ENCODE measurements at regions of chr20 and their contacts with region 1.

Region 1: DNA sequence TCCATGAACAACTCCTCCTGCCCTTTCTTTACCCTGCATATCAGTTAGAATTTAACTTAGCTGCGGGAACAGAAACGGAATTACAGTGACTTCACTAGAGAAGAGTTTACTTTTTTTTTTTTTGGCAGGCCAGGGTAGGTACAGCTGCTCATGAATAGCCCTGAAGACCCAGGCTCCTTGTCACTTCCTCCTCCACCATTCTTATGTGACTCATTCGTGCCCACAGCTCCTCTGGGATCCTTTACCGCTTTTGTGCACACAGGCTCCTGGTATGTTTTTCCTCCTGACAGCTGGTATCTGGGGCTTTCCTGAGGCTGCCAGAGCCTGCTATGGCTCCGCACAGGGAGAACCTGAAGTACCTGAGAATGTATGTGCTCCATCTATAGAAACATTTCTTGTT is 3.9 kb upstream of the KCNS1 start:
- DNase-seq: no peak
- H3K4me3 ChIP-seq: no peak overlapping the region
- H3K27ac ChIP-seq: no peak overlapping the region
- H3K4me1 ChIP-seq: peaks cover 0 to 6% (median 3%) of the 10 kb centered on the region in 4 experiments; a peak in 2 of 7 replicates
- H3K27me3 ChIP-seq: peaks cover 0 to 18% (median 12%) of the 10 kb centered on the region in 4 experiments; a peak in 4 of 7 replicates
- CTCF ChIP-seq: no peak
- EP300 ChIP-seq: no peak
- POLR2A ChIP-seq: no peak
- RAD21 ChIP-seq: no peak

Region 2: GRCh38 chr20:44966030-44966961 is 138.5 kb before region 1 on chr20 and contains the start of gene STK4:
- CTCF ChIA-PET with region 1: no interaction called
- POLR2A ChIA-PET with region 1: no interaction called
- DNase-seq: peak; percentile 75 to 95
- H3K4me3 ChIP-seq: peak within 1 kb of the TSS; percentile 83 to 96 (median 92)
- H3K27ac ChIP-seq: peak within 1 kb of the TSS; percentile 52; the same call in 1 of the 2 replicates
- H3K4me1 ChIP-seq: peaks cover 3 to 5% (median 3%) of the 10 kb centered on the region in 4 experiments; a peak in 5 of 7 replicates
- H3K27me3 ChIP-seq: peaks cover 0 to 11% (median 0%) of the 10 kb centered on the region in 4 experiments; a peak in 4 of 7 replicates
- CTCF ChIP-seq: peak; percentile 37 to 58 (median 44)
- EP300 ChIP-seq: 0 out of 3 replicates have a peak, but pooled peaks of 1 of the 2 experiments have one; percentile 28
- POLR2A ChIP-seq: peak in 1 of 2 experiments; percentile 50; a peak in 2 of 3 replicates
- RAD21 ChIP-seq: peak in 1 of 2 experiments; percentile 32; a peak in 2 of 4 replicates
- total RNA-seq, gene STK4: 33.8 and 34.3 TPM in 2 replicates

Region 3: DNA sequence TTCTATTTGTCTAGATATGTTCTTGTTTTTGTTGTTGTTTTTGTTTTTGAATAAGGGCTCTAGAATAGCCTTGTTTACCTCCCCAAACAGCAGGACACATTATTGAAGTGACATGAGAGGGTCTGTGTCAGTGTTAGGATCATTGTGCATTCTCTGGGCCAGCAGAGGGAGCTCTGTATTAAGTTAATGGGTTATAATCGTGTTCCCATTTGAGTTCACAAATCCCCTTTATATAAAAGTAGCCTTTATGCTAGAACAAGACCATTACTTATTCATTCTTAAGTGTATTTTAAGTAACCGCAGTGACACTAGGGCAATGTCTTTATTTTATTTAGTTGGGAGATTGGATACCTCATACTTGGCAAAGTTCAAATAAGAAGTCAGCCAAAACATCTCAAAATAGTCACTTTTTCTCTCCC is 93.7 kb before region 1 on chr20:
- CTCF ChIA-PET with region 1: interaction called, 31 read pairs
- POLR2A ChIA-PET with region 1: no interaction called
- DNase-seq: peak in 1 of 2 experiments; percentile 55
- H3K4me3 ChIP-seq: no peak overlapping the region
- H3K27ac ChIP-seq: no peak overlapping the region
- H3K4me1 ChIP-seq: no peaks in the 10 kb centered on the region; a peak in 1 of 7 replicates
- H3K27me3 ChIP-seq: no peaks in the 10 kb centered on the region
- CTCF ChIP-seq: peak in 2 of 3 experiments; percentile 65 to 73; a peak in 3 of 4 replicates
- EP300 ChIP-seq: no peak
- POLR2A ChIP-seq: no peak
- RAD21 ChIP-seq: peak; percentile 85 to 86